Heart right ventricle (tissue), 16 donors: ENCODE measurements at regions of chrX and their contacts with region 1.

Region 1: DNA sequence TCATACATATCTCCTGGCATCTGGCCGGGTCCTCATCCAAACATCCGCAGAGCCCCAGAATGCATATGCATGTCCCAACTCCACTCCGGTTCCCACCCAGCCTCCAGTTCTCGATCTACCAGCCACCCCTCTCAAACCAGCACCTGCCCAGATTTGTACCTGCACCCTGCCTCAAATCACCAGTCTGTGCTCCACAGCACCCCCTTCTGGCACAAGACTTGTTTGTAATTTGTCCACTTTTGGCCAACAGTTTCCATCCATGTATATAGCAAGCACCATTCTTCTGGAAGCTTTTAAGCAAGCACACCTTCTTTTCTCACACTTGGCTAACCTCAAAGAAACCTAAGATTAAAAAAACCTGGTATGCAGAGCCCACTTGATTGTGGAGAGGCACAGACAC is 644.1 kb downstream of the MID1IP1 start:
- DNase-seq: no peak
- ATAC-seq: no peak
- H3K4me3 ChIP-seq: no peak overlapping the region
- H3K27ac ChIP-seq: no peak overlapping the region
- H3K4me1 ChIP-seq: peaks cover 0 to 2% (median 0%) of the 10 kb centered on the region in 9 donors
- H3K27me3 ChIP-seq: peaks cover 0 to 5% (median 0%) of the 10 kb centered on the region in 7 donors
- CTCF ChIP-seq: peak in 6 of 9 donors; percentile 21 to 48 (median 28)

Region 2: DNA sequence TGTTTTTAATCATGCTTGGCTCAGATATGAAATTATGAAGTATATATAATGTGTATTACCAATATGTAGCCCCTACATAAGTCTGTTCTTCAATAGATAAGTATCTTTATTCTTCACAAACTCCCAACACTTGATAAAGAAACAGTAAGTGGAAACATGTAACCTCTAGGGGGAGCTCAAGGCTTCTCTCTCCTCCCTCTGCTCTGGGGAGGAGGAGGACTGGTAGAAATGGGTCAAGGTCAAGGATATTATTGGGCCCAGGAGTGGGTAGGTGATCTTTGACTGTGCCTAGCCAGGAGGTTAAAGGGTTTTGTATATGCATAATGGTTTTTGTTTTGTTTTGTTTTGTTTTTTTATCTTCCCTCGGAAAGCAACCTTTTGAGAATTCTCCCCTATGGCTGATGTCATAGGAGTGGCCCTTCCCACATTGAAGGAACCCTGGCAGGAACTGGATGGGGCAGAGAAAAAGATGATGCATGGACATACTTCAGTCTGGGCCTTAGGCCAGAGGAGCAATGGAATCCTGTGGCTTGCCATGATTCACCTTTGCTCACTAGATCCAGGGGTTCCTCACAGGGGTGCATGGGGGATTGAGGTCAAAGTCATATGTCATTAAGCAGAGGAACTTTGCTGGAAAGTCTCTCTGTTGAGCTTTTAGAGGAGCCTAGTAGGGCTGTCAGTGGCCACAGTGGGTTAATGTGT is 183.7 kb before region 1 on chrX:
- intact Hi-C with region 1: loop called in 2 of 10 experiments (anchors 10 kb)
- DNase-seq: peak in 1 of 2 donors; percentile 13
- ATAC-seq: peak in 1 of 8 donors; percentile 45
- H3K4me3 ChIP-seq: no peak overlapping the region
- H3K27ac ChIP-seq: no peak overlapping the region
- H3K4me1 ChIP-seq: no peaks in the 10 kb centered on the region
- H3K27me3 ChIP-seq: peaks cover 0 to 7% (median 0%) of the 10 kb centered on the region in 7 donors
- CTCF ChIP-seq: peak; percentile 19 to 69 (median 56)